Endothelial cell of umbilical vein (primary cell): ENCODE measurements at regions of chr1 and their contacts with region 1.

Region 1: DNA sequence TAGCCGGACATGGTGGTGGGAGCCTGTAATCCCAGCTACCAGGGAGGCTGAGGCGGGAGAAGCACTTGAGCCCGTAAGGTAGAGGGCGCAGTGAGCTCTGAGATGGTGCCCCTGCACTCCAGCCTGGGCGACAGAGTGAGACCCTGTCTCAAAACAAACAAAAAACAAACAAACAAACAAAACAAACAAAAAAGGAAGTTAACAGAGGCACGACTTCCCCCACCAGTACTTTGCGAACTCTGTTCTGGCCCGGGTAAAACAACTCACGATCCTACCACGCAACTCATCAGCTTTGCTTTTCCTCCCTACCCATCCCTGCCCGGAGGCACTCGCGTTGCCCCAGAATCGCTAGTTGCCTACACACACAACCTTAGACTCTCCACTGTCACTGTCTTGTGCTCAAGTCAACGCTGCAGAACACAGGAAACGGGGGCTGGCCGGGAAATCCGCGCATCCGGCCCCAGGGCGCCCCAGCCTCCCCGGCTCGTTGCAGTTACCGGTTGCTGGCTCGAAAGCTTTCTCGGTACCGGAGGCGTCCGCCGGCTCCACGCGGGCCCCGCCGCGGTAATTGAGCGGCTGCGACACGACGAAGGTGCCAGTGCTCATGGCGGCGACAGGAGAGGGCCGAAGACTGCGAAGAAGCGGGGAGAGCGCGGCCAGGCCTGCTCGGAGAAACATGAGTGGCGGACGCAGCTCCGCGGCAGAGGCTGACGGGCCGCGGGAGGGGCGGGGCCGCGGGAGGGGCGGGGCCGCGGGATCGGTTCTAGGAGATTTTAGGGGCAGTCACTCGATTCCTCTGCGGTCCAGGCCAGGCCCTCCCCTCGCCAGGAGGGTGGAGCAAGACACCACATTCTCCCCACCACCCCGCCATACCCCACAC is at the start of gene ALDH9A1:
- DNase-seq: peak; percentile 84
- H3K4me3 ChIP-seq: peak within 1 kb of the TSS; percentile 36 to 75 (median 55)
- H3K27ac ChIP-seq: peak within 1 kb of the TSS; percentile 72
- H3K4me1 ChIP-seq: peaks cover 21% of the 10 kb centered on the region
- H3K27me3 ChIP-seq: peaks cover 2 to 3% of the 10 kb centered on the region in 2 experiments
- CTCF ChIP-seq: peak in 1 of 2 donors; percentile 30
- POLR2A ChIP-seq: peak; percentile 82
- total RNA-seq, gene ALDH9A1: 41.4 and 47.4 TPM in 2 replicates

Region 2: DNA sequence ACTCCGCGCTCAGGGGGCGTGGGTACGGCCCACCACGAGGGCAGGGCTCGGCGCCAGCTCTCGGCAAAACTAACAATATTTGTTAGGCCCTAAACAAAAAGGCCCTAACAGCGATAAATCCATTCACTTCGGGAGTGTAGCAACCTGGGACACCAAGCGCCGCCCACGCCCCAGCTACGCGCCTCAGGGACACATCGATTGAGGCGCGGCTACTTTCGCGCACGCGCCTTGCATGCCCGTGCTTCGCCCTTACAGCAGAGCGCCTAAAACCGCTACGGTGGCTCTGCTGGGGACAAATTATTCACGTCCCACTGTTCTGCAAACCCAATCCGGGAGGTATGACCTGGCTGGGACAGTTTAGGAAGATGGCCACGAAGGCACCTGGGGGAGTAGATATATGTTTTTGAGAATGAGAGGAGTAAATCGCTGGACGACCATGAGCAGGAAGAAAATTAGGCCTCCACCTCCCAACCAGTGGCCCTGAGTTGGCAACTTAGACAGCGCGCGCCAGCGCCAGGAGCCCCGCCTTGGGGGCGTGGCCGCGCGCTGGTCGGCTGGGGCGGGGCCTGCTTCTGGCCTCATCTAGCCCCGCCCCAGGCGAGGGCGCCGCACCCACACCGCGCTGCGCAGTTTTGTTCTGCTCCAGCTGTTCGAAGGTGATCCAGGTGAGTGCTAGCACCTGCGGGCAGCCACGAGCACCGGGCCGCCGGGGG is 67.3 kb before region 1 on chr1 and contains the start of gene MGST3:
- CTCF ChIA-PET with region 1: interaction called, 6 read pairs
- POLR2A ChIA-PET with region 1: no interaction called
- dilution Hi-C with region 1: no loop called
- intact Hi-C with region 1: loop called (anchors 1 kb)
- DNase-seq: peak; percentile 97
- H3K4me3 ChIP-seq: peak within 1 kb of the TSS; percentile 88 to 94 (median 89)
- H3K27ac ChIP-seq: peak within 1 kb of the TSS; percentile 73
- H3K4me1 ChIP-seq: peaks cover 19% of the 10 kb centered on the region
- H3K27me3 ChIP-seq: peaks cover 4 to 9% of the 10 kb centered on the region in 2 experiments
- CTCF ChIP-seq: no peak
- POLR2A ChIP-seq: peak; percentile 86
- total RNA-seq, gene MGST3: 164 and 196 TPM in 2 replicates

Region 3: GRCh38 chr1:165707984-165708706 is 10.0 kb after region 1 on chr1:
- CTCF ChIA-PET with region 1: interaction called, 10 read pairs
- POLR2A ChIA-PET with region 1: no interaction called
- dilution Hi-C with region 1: no loop called
- intact Hi-C with region 1: no loop called
- DNase-seq: no peak
- H3K4me3 ChIP-seq: no peak overlapping the region
- H3K27ac ChIP-seq: no peak overlapping the region
- H3K4me1 ChIP-seq: no peaks in the 10 kb centered on the region
- H3K27me3 ChIP-seq: peaks cover 5 to 16% of the 10 kb centered on the region in 2 experiments
- CTCF ChIP-seq: no peak
- POLR2A ChIP-seq: no peak

Region 4: DNA sequence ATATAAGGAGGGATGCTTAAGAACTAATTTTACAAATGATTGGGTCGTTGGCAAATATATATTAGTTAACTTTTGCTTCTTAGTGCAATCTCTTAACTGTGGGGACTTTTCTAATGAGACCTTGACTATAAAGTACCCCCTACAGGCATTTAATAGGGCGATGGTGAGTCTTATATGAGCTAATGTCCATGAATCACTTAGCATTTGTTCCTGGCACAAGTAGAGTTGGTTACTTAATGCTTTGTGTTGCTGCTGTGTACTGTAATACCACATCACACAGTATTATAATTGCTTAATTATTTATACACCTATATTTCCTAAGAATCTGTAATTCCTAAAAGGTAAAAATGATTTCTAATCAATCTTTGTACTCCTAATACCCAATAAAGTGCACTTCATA is 95.8 kb after region 1 on chr1:
- CTCF ChIA-PET with region 1: no interaction called
- POLR2A ChIA-PET with region 1: no interaction called
- dilution Hi-C with region 1: no loop called
- intact Hi-C with region 1: no loop called
- DNase-seq: no peak
- H3K4me3 ChIP-seq: no peak overlapping the region
- H3K27ac ChIP-seq: no peak overlapping the region
- H3K4me1 ChIP-seq: no peaks in the 10 kb centered on the region
- H3K27me3 ChIP-seq: no peaks in the 10 kb centered on the region
- CTCF ChIP-seq: no peak
- POLR2A ChIP-seq: no peak